Naive thymus-derived CD4-positive, alpha-beta T cell (primary cell): ENCODE measurements at regions of chr6 and their contacts with region 1.

Region 1: DNA sequence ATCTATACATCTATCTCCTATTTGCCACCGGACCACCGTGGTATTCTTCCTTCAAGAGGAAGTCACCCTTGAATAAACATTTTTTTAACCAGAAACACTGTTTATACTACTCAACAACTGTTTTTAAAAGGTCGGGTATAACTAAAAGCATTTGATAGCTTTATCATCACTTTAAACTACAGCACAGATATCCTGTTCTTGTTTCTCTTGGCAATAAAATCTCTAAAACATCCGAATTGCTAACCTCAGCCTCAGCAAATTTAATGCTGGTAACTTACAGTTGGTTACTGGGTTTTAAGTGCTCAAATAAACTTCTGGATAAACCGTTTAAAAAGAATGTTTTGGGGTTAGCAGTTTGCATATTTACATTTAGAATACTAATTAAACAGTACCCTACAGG is 20.4 kb downstream of the ZUP1 start:
- DNase-seq: no peak
- ATAC-seq: no peak
- H3K4me3 ChIP-seq: no peak overlapping the region
- H3K4me3 Mint-ChIP-seq: no peak overlapping the region
- H3K27ac ChIP-seq: no peak overlapping the region
- H3K27ac Mint-ChIP-seq: peak overlapping the region in 1 of 9 donors; percentile 8
- H3K4me1 ChIP-seq: no peaks in the 10 kb centered on the region
- H3K4me1 Mint-ChIP-seq: peaks cover 0 to 13% (median 9%) of the 10 kb centered on the region in 7 donors
- H3K27me3 ChIP-seq: no peaks in the 10 kb centered on the region
- H3K27me3 Mint-ChIP-seq: no peaks in the 10 kb centered on the region

Region 2: DNA sequence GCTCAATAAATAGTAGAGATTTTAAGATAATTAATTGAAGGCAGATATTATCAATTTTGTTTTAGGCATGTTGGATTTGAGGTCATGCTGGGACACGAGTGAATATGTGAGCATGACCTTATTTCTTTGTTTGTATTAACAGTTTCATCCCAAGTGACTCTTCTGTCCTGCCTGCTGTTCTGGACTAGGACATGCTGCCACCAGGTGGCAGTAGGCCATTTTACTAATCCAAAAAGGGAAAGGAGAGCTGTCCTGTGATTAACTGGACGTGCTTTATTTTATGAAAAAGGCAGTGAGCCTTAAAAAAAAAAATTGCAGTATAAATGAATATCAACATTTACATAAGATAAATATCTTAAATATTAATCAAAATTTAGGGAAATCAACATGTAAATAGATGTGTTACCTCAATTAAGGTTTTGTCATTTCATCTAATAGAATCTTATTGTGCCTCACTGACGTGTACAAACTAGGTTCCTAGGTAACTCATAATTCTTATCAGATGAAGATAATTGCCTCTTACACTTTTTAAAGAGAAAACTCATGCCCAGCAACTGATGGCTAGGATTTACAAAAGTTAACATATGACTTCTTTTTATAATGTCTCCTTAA is 637.3 kb before region 1 on chr6:
- CTCF ChIA-PET with region 1: no interaction called
- POLR2A ChIA-PET with region 1: no interaction called
- intact Hi-C with region 1: loop called in 1 of 2 experiments (anchors 2 kb)
- DNase-seq: peak in 7 of 9 donors; percentile 17 to 32 (median 27)
- ATAC-seq: no peak
- H3K4me3 ChIP-seq: no peak overlapping the region
- H3K4me3 Mint-ChIP-seq: no peak overlapping the region
- H3K27ac ChIP-seq: no peak overlapping the region
- H3K27ac Mint-ChIP-seq: no peak overlapping the region
- H3K4me1 ChIP-seq: no peaks in the 10 kb centered on the region
- H3K4me1 Mint-ChIP-seq: no peaks in the 10 kb centered on the region
- H3K27me3 ChIP-seq: no peaks in the 10 kb centered on the region
- H3K27me3 Mint-ChIP-seq: peaks cover 4 to 20% (median 9%) of the 10 kb centered on the region in 5 donors

Region 3: GRCh38 chr6:116217069-116217468 is 431.1 kb before region 1 on chr6:
- CTCF ChIA-PET with region 1: no interaction called
- POLR2A ChIA-PET with region 1: no interaction called
- intact Hi-C with region 1: loop called in 1 of 2 experiments (anchors 1 kb)
- DNase-seq: peak in 6 of 9 donors; percentile 10 to 55 (median 44)
- ATAC-seq: peak; percentile 86
- H3K4me3 ChIP-seq: no peak overlapping the region
- H3K4me3 Mint-ChIP-seq: no peak overlapping the region
- H3K27ac ChIP-seq: no peak overlapping the region
- H3K27ac Mint-ChIP-seq: peak overlapping the region in 5 of 9 donors; percentile 7 to 76 (median 44)
- H3K4me1 ChIP-seq: no peaks in the 10 kb centered on the region
- H3K4me1 Mint-ChIP-seq: peaks cover 0 to 12% (median 6%) of the 10 kb centered on the region in 7 donors
- H3K27me3 ChIP-seq: no peaks in the 10 kb centered on the region
- H3K27me3 Mint-ChIP-seq: no peaks in the 10 kb centered on the region

Region 4: DNA sequence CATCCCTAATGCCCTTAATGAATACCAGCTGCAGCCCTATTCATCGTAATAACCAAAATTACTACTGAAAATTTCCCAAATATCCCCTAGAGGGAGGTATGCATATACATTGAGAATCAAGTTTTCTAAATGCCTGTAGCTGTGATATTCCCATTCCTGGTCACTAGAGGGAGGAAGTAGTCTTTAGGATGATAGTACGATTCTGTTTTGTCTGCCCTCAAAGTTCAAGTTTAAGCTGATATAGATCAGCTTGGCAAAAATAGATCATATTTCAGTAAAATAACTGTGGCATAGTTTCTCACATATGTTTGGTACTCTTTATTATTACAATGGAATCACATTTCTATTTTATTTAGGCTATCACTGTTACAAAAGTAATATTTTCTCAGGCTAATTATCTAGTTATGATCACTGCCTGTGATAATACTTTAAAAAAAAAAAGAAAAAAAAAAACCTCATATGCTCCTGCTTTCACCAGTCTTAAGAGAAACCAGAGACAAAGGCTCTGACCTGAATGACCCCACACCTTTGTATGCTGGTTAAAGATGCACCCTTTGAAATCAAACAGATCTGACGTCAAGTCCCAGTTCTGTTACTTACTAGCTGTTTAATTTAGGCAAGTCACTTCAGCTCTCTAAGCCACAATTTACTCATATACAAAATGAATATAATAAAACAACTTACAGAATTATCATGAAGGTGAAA is 379.4 kb before region 1 on chr6:
- CTCF ChIA-PET with region 1: no interaction called
- POLR2A ChIA-PET with region 1: no interaction called
- intact Hi-C with region 1: loop called in 1 of 2 experiments (anchors 5 kb)
- DNase-seq: peak in 7 of 9 donors; percentile 21 to 54 (median 49)
- ATAC-seq: peak; percentile 93
- H3K4me3 ChIP-seq: no peak overlapping the region
- H3K4me3 Mint-ChIP-seq: no peak overlapping the region
- H3K27ac ChIP-seq: peak overlapping the region; percentile 6
- H3K27ac Mint-ChIP-seq: peak overlapping the region in 7 of 9 donors; percentile 1 to 60 (median 23)
- H3K4me1 ChIP-seq: no peaks in the 10 kb centered on the region
- H3K4me1 Mint-ChIP-seq: peaks cover 8 to 56% (median 49%) of the 10 kb centered on the region in 7 donors
- H3K27me3 ChIP-seq: no peaks in the 10 kb centered on the region
- H3K27me3 Mint-ChIP-seq: no peaks in the 10 kb centered on the region

Region 5: DNA sequence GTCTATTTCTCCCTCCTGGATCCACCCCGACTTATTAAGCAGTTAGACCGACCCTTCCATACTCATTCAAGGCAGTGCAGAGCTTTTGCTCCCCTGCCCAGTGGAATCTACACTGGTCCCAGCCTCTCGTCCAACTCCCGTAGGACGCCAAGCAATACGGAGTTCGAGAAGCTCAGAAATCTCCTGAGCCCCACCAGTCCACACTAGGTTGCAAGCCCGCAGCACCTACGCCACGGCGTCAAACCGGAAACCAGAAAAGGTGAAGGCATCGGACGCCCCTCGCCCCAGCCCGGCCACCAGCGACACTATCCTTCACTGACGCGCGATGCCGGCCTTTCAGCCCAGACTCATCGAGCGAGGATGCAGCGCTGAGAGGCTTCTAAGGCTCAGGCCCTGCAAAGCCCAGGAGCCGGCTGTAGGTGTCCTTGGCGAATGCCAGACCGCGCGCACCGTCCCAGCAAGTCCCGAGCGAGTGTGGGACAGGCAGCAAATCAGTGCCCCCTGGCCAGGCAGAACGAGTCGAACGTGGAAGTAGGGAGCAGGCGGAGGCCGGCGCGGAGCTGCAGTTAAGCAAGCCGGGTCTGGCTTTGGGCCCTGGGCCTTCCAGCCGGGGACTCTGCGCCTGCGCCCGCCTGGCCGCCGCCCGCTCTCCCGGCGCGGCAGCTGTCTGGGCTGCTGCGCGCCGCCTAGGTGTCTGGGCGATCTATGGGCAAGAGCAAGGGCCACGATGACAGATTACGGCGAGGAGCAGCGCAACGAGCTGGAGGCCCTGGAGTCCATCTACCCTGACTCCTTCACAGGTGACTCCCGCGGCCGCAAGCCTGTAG is 77.1 kb before region 1 on chr6 and contains the start of gene RWDD1:
- CTCF ChIA-PET with region 1: no interaction called
- POLR2A ChIA-PET with region 1: no interaction called
- intact Hi-C with region 1: loop called in 1 of 2 experiments (anchors 5 kb)
- DNase-seq: peak; percentile 91 to 99 (median 98)
- ATAC-seq: peak; percentile 98
- H3K4me3 ChIP-seq: peak within 1 kb of the TSS; percentile 86
- H3K4me3 Mint-ChIP-seq: peak within 1 kb of the TSS; percentile 94 to 99 (median 98)
- H3K27ac ChIP-seq: peak within 1 kb of the TSS; percentile 95
- H3K27ac Mint-ChIP-seq: peak within 1 kb of the TSS; percentile 96 to 100 (median 99)
- H3K4me1 ChIP-seq: peaks cover 16 to 21% of the 10 kb centered on the region in 2 donors
- H3K4me1 Mint-ChIP-seq: peaks cover 33 to 62% (median 55%) of the 10 kb centered on the region in 7 donors
- H3K27me3 ChIP-seq: no peaks in the 10 kb centered on the region
- H3K27me3 Mint-ChIP-seq: peaks cover 0 to 11% (median 0%) of the 10 kb centered on the region in 5 donors
- total RNA-seq, gene RWDD1: 33.2 to 39.9 (median 36.7) TPM

Region 6: DNA sequence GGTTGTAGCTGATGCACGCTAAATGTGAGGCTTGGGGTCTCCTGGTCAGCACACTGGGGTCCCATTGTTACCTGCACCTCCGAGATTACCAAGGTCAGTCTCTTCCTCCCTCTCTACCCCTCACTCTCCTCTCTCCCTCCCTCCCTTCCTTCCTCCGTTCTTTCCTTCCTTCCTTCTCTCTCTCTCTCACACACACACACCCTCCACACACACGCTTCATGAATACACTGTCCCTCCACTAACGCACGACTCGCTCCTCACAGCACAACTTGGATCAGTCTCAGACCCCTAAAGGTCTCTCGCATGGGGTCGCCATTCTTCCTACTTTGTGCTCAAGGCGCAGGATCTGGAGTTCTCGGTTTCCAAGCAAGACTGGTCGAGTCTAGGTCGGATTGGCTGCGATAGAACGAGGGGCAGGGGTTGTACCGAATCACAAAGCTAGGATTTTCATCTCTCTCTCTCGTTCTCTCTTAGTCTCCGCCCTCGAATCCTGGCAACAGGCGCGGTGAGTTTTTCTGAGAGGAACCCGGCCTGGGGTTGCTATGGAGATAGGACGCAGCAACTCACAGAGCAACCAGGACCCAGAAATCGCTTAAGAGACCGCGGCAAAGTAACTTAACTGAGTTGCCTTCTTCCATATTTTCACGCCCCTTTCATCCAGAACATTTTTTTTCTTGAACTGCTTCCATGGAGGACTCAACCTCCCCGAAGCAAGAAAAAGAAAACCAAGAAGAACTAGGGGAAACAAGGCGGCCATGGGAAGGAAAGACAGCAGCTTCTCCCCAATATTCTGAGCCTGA is 32.0 kb before region 1 on chr6 and contains the start of gene RSPH4A:
- CTCF ChIA-PET with region 1: no interaction called
- POLR2A ChIA-PET with region 1: no interaction called
- intact Hi-C with region 1: loop called in 1 of 2 experiments (anchors 2 kb)
- DNase-seq: peak; percentile 17 to 76 (median 61)
- ATAC-seq: peak; percentile 95
- H3K4me3 ChIP-seq: peak within 1 kb of the TSS; percentile 78
- H3K4me3 Mint-ChIP-seq: peak within 1 kb of the TSS; percentile 81 to 94 (median 86)
- H3K27ac ChIP-seq: peak within 1 kb of the TSS; percentile 28
- H3K27ac Mint-ChIP-seq: peak within 1 kb of the TSS in 8 of 9 donors; percentile 4 to 78 (median 38)
- H3K4me1 ChIP-seq: peaks cover 5 to 6% of the 10 kb centered on the region in 2 donors
- H3K4me1 Mint-ChIP-seq: peaks cover 6 to 22% (median 16%) of the 10 kb centered on the region in 7 donors
- H3K27me3 ChIP-seq: no peaks in the 10 kb centered on the region
- H3K27me3 Mint-ChIP-seq: peaks cover 0 to 54% (median 14%) of the 10 kb centered on the region in 5 donors
- total RNA-seq, gene RSPH4A: 0.53 to 1.3 (median 0.73) TPM

Region 7: GRCh38 chr6:116761779-116762178 is 113.6 kb after region 1 on chr6:
- CTCF ChIA-PET with region 1: no interaction called
- POLR2A ChIA-PET with region 1: no interaction called
- intact Hi-C with region 1: no loop called
- DNase-seq: no peak
- ATAC-seq: no peak
- H3K4me3 ChIP-seq: no peak overlapping the region
- H3K4me3 Mint-ChIP-seq: no peak overlapping the region
- H3K27ac ChIP-seq: no peak overlapping the region
- H3K27ac Mint-ChIP-seq: no peak overlapping the region
- H3K4me1 ChIP-seq: no peaks in the 10 kb centered on the region
- H3K4me1 Mint-ChIP-seq: peaks cover 2 to 14% (median 13%) of the 10 kb centered on the region in 7 donors
- H3K27me3 ChIP-seq: peaks cover 0 to 5% of the 10 kb centered on the region in 2 donors
- H3K27me3 Mint-ChIP-seq: peaks cover 38 to 59% (median 52%) of the 10 kb centered on the region in 5 donors